Endothelial cell of umbilical vein (primary cell): ENCODE measurements at regions of chr16 and their contacts with region 1.

Region 1: GRCh38 chr16:77788181-77789084 is at the start of gene VAT1L:
- DNase-seq: peak; percentile 54
- H3K4me3 ChIP-seq: peak within 1 kb of the TSS; percentile 41 to 61 (median 50)
- H3K27ac ChIP-seq: no peak within 1 kb of the TSS
- H3K4me1 ChIP-seq: peaks cover 4% of the 10 kb centered on the region
- H3K27me3 ChIP-seq: peaks cover 28 to 41% of the 10 kb centered on the region in 2 experiments
- CTCF ChIP-seq: no peak
- POLR2A ChIP-seq: no peak
- total RNA-seq, gene VAT1L: 1.5 and 2.1 TPM in 2 replicates

Region 2: GRCh38 chr16:77833921-77834634 is 45.6 kb after region 1 on chr16:
- CTCF ChIA-PET with region 1: interaction called, 4 read pairs
- POLR2A ChIA-PET with region 1: interaction called, 5 read pairs
- dilution Hi-C with region 1: no loop called
- intact Hi-C with region 1: loop called (anchors 2 kb)
- DNase-seq: peak; percentile 89
- H3K4me3 ChIP-seq: no peak overlapping the region
- H3K27ac ChIP-seq: peak overlapping the region; percentile 99
- H3K4me1 ChIP-seq: peaks cover 14% of the 10 kb centered on the region
- H3K27me3 ChIP-seq: no peaks in the 10 kb centered on the region
- CTCF ChIP-seq: no peak
- POLR2A ChIP-seq: peak; percentile 53

Region 3: DNA sequence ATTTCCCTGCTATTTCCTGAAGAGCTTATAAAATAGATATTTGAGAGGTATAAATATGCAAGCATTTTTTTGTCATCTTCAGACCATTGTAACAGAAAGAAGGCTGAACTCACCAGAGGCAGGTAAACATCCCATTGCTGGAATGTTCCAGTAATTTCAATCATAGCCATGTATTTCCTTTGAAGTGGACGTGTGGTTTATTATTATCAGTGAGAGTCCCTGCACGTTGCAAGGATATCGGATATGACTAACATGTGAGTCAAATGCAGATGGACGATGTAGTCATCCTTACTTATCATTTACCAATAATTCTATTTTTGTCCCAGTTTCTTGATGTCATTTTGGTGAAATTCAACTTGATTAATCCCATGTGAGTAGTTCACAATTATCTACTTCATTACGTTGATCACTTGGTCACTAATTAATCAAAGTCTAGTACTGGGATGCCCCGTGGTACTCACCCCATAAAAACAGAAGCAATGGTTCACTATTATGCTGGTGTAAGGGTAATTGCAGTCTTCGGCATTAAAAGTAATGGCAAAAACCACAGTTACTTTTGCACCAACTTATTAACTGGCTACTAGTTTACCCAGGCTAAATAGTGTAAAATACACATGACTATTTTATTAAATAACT is 89.4 kb after region 1 on chr16:
- CTCF ChIA-PET with region 1: no interaction called
- POLR2A ChIA-PET with region 1: no interaction called
- dilution Hi-C with region 1: no loop called
- intact Hi-C with region 1: loop called (anchors 2 kb)
- DNase-seq: peak; percentile 61
- H3K4me3 ChIP-seq: no peak overlapping the region
- H3K27ac ChIP-seq: peak overlapping the region; percentile 67
- H3K4me1 ChIP-seq: peaks cover 9% of the 10 kb centered on the region
- H3K27me3 ChIP-seq: no peaks in the 10 kb centered on the region
- CTCF ChIP-seq: no peak
- POLR2A ChIP-seq: no peak

Region 4: DNA sequence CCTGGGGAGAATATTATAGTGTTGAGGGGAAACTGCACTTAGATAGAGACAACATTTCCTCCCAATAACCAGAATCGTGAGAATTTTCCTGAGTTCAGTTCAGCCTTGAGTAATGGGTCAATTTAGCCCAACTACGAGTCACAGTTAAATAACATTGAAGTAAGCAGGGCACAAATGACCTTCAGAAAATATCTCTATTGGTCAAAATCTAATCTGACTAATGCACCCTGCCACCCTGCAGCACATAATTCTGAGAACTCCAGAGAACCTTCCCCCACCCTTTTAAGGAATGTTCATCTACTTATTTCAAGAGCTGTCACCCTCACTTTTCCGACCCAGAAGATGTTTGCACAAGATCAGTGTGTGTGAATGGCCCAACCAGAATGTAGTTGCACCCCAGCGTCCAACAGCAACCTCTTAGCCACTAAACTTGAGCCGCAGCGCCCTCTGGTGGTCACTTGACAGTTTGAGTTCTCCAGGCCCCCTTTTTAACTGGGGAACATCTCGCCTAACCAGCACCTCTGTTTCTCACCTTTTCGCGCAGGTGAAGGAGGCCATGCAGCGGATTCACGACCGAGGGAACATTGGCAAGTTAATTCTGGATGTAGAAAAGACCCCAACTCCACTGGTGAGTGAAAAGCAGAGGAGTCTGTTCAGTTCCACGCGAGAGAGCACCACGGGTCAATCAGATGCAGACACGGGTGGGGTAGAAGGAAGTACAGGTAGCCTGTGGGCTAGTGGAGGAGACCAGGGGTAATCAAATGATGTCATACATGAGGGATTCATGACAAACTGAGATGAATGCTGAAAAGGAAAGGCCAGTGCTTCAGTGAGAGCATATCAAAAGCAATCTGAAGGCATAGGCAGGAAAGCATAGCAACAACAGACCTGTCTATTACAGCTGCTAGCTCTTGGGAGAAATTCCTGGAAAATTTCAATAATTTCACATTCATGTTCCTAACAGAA is 183.2 kb after region 1 on chr16:
- CTCF ChIA-PET with region 1: no interaction called
- POLR2A ChIA-PET with region 1: no interaction called
- dilution Hi-C with region 1: no loop called
- intact Hi-C with region 1: loop called (anchors 2 kb)
- DNase-seq: peak; percentile 52
- H3K4me3 ChIP-seq: no peak overlapping the region
- H3K27ac ChIP-seq: no peak overlapping the region
- H3K4me1 ChIP-seq: no peaks in the 10 kb centered on the region
- H3K27me3 ChIP-seq: no peaks in the 10 kb centered on the region
- CTCF ChIP-seq: peak; percentile 73 to 81
- POLR2A ChIP-seq: no peak